Dorsolateral prefrontal cortex (tissue), 120 donors: ENCODE measurements at regions of chr4 and their contacts with region 1.

Region 1: GRCh38 chr4:43163101-43163792 is 270.7 kb downstream of the GRXCR1 start:
- DNase-seq: no peak
- H3K4me3 ChIP-seq: no peak overlapping the region
- H3K27ac ChIP-seq: no peak overlapping the region
- H3K27me3 ChIP-seq: no peaks in the 10 kb centered on the region
- CTCF ChIP-seq: no peak

Region 2: DNA sequence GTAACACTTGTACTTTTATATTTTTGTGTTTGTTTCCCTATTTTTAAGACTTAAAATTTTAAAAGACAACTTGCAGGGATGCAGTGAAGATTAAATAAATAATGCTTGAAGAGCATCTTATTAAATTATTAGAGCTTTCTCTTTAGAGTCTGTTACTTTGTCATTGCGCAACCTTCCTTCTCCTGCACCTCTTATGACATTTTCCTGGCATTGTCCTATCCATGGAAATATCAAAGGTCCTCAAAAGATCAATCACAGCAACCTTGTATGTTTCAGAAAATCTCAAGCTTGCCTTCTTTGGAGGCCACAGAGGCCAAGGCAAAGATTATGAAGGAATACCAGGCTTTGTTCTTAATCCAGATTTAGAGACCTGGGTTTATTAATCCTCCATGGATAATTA is 154.5 kb before region 1 on chr4:
- intact Hi-C with region 1: no loop called
- DNase-seq: no peak
- H3K4me3 ChIP-seq: no peak overlapping the region
- H3K27ac ChIP-seq: no peak overlapping the region
- H3K27me3 ChIP-seq: peaks cover 0 to 3% (median 0%) of the 10 kb centered on the region in 45 donors
- CTCF ChIP-seq: no peak

Region 3: GRCh38 chr4:43113196-43113595 is 50.1 kb before region 1 on chr4:
- intact Hi-C with region 1: loop called in 1 of 2 experiments (anchors 2 kb)
- DNase-seq: no peak
- H3K4me3 ChIP-seq: no peak overlapping the region
- H3K27ac ChIP-seq: no peak overlapping the region
- H3K27me3 ChIP-seq: no peaks in the 10 kb centered on the region
- CTCF ChIP-seq: no peak

Region 4: GRCh38 chr4:43271946-43272345 is 108.7 kb after region 1 on chr4:
- intact Hi-C with region 1: no loop called
- DNase-seq: no peak
- H3K4me3 ChIP-seq: no peak overlapping the region
- H3K27ac ChIP-seq: no peak overlapping the region
- H3K27me3 ChIP-seq: no peaks in the 10 kb centered on the region
- CTCF ChIP-seq: no peak